Mammary epithelial cell (primary cell): ENCODE measurements at regions of chr17 and their contacts with region 1.

Region 1: GRCh38 chr17:50583641-50584040 is 23.1 kb downstream of the CACNA1G start:
- DNase-seq: no peak
- H3K4me3 ChIP-seq: no peak overlapping the region
- H3K27ac ChIP-seq: no peak overlapping the region
- H3K4me1 ChIP-seq: peaks cover 4% of the 10 kb centered on the region
- H3K27me3 ChIP-seq: peaks cover 7% of the 10 kb centered on the region
- CTCF ChIP-seq: no peak

Region 2: GRCh38 chr17:50533720-50534148 is 49.9 kb before region 1 on chr17:
- CTCF ChIA-PET with region 1: no interaction called
- dilution Hi-C with region 1: no loop called
- in situ Hi-C with region 1: no loop called
- intact Hi-C with region 1: no loop called
- DNase-seq: no peak
- H3K4me3 ChIP-seq: peak overlapping the region; percentile 51 to 87 (median 64)
- H3K27ac ChIP-seq: peak overlapping the region; percentile 9
- H3K4me1 ChIP-seq: peaks cover 49% of the 10 kb centered on the region
- H3K27me3 ChIP-seq: no peaks in the 10 kb centered on the region
- CTCF ChIP-seq: no peak

Region 3: DNA sequence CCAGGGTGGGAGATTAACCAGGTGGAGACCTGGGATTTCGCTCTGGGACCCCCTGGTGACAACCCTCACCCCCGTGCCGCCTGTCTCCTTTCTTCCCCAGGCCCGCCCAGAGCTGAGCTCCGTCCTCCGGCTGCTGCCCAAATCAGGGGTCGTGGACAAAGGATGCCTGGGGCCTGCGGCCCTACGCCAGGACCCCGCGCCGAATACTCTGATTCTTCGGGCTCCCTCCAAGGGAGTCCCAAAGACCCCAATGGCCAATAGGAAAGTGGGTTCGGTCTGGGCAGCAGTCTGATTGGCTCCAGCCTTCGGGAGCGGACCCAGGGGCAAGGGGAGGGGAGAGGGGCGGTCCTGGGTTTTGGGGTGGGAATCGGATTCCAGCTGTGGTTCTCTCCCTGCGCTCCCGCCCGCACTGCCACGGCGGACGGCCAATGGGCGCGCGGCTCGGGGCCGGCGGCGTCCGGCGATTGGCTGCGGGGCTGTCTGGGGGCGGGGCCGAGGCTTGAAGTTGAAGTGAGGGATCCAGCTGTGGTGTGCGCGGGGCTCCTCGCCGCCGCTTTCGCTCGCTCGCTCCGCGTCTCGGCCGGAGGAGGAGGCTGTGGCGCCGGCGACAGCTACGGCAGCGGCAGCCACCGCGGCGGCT is 23.3 kb before region 1 on chr17 and contains the start of gene CACNA1G:
- CTCF ChIA-PET with region 1: no interaction called
- dilution Hi-C with region 1: no loop called
- in situ Hi-C with region 1: no loop called
- intact Hi-C with region 1: loop called (anchors 2 kb)
- DNase-seq: peak; percentile 90
- H3K4me3 ChIP-seq: peak within 1 kb of the TSS; percentile 35 to 45 (median 42)
- H3K27ac ChIP-seq: no peak within 1 kb of the TSS
- H3K4me1 ChIP-seq: peaks cover 18% of the 10 kb centered on the region
- H3K27me3 ChIP-seq: peaks cover 23% of the 10 kb centered on the region
- CTCF ChIP-seq: no peak
- total RNA-seq, gene CACNA1G: 0.09 TPM in 1 of 2 donors, not detected in the other

Region 4: GRCh38 chr17:50604513-50604912 is 20.9 kb after region 1 on chr17:
- CTCF ChIA-PET with region 1: no interaction called
- dilution Hi-C with region 1: no loop called
- in situ Hi-C with region 1: no loop called
- intact Hi-C with region 1: loop called (anchors 2 kb)
- DNase-seq: no peak
- H3K4me3 ChIP-seq: no peak overlapping the region
- H3K27ac ChIP-seq: no peak overlapping the region
- H3K4me1 ChIP-seq: no peaks in the 10 kb centered on the region
- H3K27me3 ChIP-seq: peaks cover 4% of the 10 kb centered on the region
- CTCF ChIP-seq: no peak

Region 5: DNA sequence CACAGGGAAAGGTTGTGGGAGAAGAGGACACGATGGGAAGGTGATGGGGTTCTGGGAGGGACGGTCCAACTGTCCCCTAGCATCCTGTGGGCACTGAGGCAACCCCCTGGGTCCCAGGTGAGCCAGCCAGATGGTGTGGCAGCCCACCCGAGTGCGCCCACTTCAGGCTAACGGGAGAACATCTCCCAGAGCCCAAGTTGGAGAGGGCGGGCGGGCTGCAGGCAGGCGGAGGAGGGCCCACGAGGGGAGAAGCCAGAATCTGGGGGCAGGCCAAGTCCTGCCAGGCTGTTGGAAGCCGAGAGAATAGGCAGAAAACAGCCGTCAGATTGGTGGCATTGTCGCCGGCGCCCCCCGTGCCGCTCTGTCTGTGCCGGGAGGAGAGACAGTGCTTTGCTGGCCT is 37.2 kb after region 1 on chr17:
- CTCF ChIA-PET with region 1: no interaction called
- dilution Hi-C with region 1: no loop called
- in situ Hi-C with region 1: no loop called
- intact Hi-C with region 1: no loop called
- DNase-seq: no peak
- H3K4me3 ChIP-seq: no peak overlapping the region
- H3K27ac ChIP-seq: no peak overlapping the region
- H3K4me1 ChIP-seq: no peaks in the 10 kb centered on the region
- H3K27me3 ChIP-seq: no peaks in the 10 kb centered on the region
- CTCF ChIP-seq: no peak